Body of pancreas (tissue), 4 donors: ENCODE measurements at regions of chr17 and their contacts with region 1.

Region 1: GRCh38 chr17:27980043-27980442 is 62.4 kb upstream of the NLK start:
- DNase-seq: no peak
- ATAC-seq: no peak
- H3K4me3 ChIP-seq: no peak overlapping the region
- H3K27ac ChIP-seq: no peak overlapping the region
- H3K4me1 ChIP-seq: peaks cover 12% of the 10 kb centered on the region
- H3K27me3 ChIP-seq: no peaks in the 10 kb centered on the region
- CTCF ChIP-seq: no peak
- POLR2A ChIP-seq: no peak

Region 2: GRCh38 chr17:27915709-27916108 is 64.3 kb before region 1 on chr17:
- intact Hi-C with region 1: loop called (anchors 10 kb)
- DNase-seq: no peak
- ATAC-seq: no peak
- H3K4me3 ChIP-seq: no peak overlapping the region
- H3K27ac ChIP-seq: no peak overlapping the region
- H3K4me1 ChIP-seq: no peaks in the 10 kb centered on the region
- H3K27me3 ChIP-seq: no peaks in the 10 kb centered on the region
- CTCF ChIP-seq: no peak
- POLR2A ChIP-seq: no peak

Region 3: DNA sequence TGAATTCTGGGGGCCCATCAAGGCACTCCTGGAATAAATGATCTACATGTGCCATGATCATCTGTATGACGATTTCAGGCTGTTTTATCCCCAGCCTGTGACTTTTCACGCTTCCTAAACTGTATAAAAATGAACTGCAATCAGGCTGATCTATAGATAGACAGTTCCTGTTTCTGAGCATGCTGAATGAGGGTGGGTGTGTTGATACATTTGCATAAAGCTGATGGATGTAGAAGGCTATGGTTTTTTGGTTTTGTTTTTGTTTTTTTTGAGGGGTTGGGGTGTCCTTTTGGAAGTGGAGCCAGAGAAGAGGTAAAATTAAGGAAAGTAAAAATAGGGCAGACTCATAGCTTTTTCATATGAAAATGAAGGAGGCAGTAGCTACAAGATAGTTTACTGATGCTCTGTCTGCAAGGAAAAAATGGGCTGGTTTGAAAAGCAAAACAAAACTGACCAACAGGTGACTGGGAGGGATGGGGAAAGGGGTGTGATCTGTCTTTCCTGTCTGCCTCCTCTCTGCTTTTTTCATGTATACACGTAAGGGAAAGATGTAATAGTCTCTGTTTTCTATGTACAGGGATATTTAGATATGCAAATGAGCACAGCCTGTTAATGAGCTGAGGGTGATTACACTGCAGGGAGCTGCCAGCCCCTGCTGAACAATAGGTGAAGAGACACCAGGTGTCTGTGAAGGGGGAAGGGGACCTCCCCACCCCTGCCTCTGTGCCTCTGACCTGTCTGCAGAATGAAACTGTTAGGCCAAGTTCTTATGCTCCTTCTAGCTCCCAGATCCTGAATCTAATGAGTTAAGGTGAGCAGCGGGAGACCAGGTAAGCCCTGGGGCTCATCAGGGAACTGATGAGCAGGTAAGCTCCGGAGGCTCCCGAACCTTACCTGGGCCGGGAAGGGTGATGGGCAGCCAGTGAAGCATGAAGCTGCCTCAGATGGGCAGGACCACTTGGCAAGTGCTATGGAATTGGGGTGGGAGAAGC is 40.3 kb before region 1 on chr17:
- intact Hi-C with region 1: loop called (anchors 10 kb)
- DNase-seq: no peak
- ATAC-seq: no peak
- H3K4me3 ChIP-seq: no peak overlapping the region
- H3K27ac ChIP-seq: no peak overlapping the region
- H3K4me1 ChIP-seq: peaks cover 11% of the 10 kb centered on the region
- H3K27me3 ChIP-seq: no peaks in the 10 kb centered on the region
- CTCF ChIP-seq: no peak
- POLR2A ChIP-seq: no peak